Activated B cell treated with CpG ODN at 0.5 μM for 24 hours (primary cell): ENCODE measurements at regions of chr1 and their contacts with region 1.

Region 1: GRCh38 chr1:223133824-223134435 is 9.1 kb downstream of the TLR5 start:
- DNase-seq: peak; percentile 62
- ATAC-seq: peak; percentile 92
- H3K4me3 Mint-ChIP-seq: peak overlapping the region; percentile 55
- H3K27ac Mint-ChIP-seq: no peak overlapping the region
- H3K4me1 Mint-ChIP-seq: peaks cover 12% of the 10 kb centered on the region
- H3K27me3 Mint-ChIP-seq: peaks cover 62% of the 10 kb centered on the region
- CTCF ChIP-seq: no peak

Region 2: DNA sequence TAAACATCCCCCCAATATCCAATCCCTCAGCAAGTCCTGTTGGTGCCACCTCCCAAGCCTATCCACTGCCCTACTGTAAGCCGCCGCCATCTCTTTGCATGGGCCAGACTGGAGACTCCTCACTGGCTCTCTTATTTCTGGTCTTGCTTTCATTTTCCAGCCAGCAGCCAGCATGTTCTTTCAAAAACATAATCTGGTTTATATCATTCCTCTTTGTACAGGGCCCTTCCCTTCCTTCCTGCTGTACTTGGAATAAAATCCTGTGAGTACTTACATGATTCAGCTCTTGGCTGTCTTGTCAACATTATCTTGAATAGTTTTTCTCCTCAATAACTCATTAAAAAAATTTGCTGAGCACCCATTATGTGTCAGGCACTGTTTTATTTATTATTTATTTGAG is 19.1 kb before region 1 on chr1:
- CTCF ChIA-PET with region 1: interaction called, 10 read pairs
- POLR2A ChIA-PET with region 1: no interaction called
- intact Hi-C with region 1: no loop called
- DNase-seq: no peak
- ATAC-seq: no peak
- H3K4me3 Mint-ChIP-seq: no peak overlapping the region
- H3K27ac Mint-ChIP-seq: no peak overlapping the region
- H3K4me1 Mint-ChIP-seq: no peaks in the 10 kb centered on the region
- H3K27me3 Mint-ChIP-seq: peaks cover 4% of the 10 kb centered on the region
- CTCF ChIP-seq: no peak

Region 3: DNA sequence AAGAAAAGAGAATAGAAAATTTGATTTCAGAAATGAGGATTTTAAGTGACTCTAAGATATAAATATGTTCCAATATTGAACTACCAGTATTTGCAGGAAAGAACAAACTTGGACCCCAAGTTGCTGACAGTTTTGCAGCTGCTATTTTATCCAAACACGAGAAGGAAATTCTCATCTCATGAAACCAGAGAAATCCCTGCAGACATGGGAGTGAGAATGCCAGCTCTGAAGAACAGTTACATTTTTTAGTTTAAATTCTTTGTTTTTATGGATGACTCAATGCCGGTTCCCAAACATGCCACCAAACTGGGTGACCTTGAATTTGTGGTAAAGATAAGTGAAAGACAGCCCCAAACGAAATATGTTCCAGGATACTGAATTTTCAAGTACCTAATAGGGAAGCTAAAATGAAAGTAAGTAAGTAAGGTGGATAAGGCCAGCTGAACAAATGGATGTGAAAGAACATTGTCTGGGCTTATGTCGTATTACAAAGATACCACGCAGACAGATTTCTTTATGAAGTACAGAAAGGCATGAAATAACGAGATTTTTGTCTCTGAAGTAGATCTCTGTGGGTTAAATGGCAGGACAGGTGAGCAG is 10.8 kb before region 1 on chr1:
- CTCF ChIA-PET with region 1: interaction called, 38 read pairs
- POLR2A ChIA-PET with region 1: interaction called, 3 read pairs
- intact Hi-C with region 1: no loop called
- DNase-seq: no peak
- ATAC-seq: no peak
- H3K4me3 Mint-ChIP-seq: peak overlapping the region; percentile 36
- H3K27ac Mint-ChIP-seq: no peak overlapping the region
- H3K4me1 Mint-ChIP-seq: peaks cover 8% of the 10 kb centered on the region
- H3K27me3 Mint-ChIP-seq: peaks cover 7% of the 10 kb centered on the region
- CTCF ChIP-seq: no peak

Region 4: DNA sequence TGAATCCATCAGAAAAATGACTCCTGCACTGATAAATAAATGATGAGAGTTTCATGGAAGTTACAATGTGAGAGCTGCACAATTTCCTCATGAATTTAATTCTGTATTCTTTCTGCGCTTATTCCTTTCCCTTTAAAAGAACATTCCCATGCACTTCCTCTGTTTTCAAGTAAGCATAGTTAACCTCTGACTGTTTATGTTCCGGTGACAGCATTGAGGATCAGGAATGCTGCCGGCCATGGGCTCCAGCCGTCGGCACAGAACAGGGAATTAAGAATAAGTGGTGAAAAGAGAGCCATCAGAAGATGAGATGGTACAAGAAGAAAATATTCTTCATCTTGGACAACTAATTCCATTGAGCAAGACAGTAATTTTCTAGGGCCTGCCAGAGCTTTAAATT is 164.8 kb after region 1 on chr1:
- CTCF ChIA-PET with region 1: no interaction called
- POLR2A ChIA-PET with region 1: no interaction called
- intact Hi-C with region 1: no loop called
- DNase-seq: no peak
- ATAC-seq: no peak
- H3K4me3 Mint-ChIP-seq: no peak overlapping the region
- H3K27ac Mint-ChIP-seq: no peak overlapping the region
- H3K4me1 Mint-ChIP-seq: no peaks in the 10 kb centered on the region
- H3K27me3 Mint-ChIP-seq: no peaks in the 10 kb centered on the region
- CTCF ChIP-seq: no peak

Region 5: GRCh38 chr1:223363856-223364684 is 230.1 kb after region 1 on chr1 and contains the start of gene SUSD4:
- CTCF ChIA-PET with region 1: interaction called, 4 read pairs
- POLR2A ChIA-PET with region 1: no interaction called
- intact Hi-C with region 1: loop called (anchors 10 kb)
- DNase-seq: peak; percentile 21
- ATAC-seq: peak; percentile 66
- H3K4me3 Mint-ChIP-seq: peak within 1 kb of the TSS; percentile 81
- H3K27ac Mint-ChIP-seq: no peak within 1 kb of the TSS
- H3K4me1 Mint-ChIP-seq: peaks cover 18% of the 10 kb centered on the region
- H3K27me3 Mint-ChIP-seq: peaks cover 51% of the 10 kb centered on the region
- CTCF ChIP-seq: no peak
- total RNA-seq, gene SUSD4: not detected in 2 replicates

Region 6: DNA sequence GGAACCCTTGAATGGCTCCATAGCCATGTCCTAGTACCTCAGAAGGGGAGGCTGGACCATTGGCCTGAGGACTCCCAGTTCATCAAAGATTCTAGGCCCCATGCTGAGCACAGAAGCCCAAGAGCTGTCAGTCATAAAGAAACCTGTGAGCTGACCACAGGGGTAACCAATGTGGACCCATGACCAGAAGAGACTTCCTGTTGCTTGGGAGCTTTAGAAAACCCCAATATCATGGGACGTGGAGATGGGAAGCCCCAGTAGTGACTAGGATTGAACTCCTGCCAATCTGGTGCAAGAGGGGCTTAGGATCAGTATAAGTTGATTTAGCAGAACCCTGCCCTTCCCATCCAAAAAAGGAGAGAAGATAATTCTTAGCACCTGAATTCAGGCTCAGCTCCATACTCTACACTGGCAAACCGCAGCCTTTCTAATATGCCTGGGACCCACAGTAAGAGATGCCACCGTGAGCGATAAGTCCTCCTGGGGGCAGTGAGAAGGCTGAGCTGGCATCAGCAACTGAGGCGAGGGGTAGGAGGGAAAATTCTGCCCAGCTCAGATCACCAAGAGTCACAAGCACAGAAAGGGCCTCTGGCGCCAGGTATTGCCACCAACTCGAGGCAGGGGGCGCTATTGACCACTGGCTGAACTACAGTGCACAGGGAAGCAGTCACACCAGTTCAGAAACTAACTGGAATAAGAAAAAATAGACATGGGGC is 422.6 kb after region 1 on chr1:
- CTCF ChIA-PET with region 1: no interaction called
- POLR2A ChIA-PET with region 1: no interaction called
- intact Hi-C with region 1: no loop called
- DNase-seq: no peak
- ATAC-seq: no peak
- H3K4me3 Mint-ChIP-seq: no peak overlapping the region
- H3K27ac Mint-ChIP-seq: no peak overlapping the region
- H3K4me1 Mint-ChIP-seq: no peaks in the 10 kb centered on the region
- H3K27me3 Mint-ChIP-seq: peaks cover 3% of the 10 kb centered on the region
- CTCF ChIP-seq: no peak

Region 7: DNA sequence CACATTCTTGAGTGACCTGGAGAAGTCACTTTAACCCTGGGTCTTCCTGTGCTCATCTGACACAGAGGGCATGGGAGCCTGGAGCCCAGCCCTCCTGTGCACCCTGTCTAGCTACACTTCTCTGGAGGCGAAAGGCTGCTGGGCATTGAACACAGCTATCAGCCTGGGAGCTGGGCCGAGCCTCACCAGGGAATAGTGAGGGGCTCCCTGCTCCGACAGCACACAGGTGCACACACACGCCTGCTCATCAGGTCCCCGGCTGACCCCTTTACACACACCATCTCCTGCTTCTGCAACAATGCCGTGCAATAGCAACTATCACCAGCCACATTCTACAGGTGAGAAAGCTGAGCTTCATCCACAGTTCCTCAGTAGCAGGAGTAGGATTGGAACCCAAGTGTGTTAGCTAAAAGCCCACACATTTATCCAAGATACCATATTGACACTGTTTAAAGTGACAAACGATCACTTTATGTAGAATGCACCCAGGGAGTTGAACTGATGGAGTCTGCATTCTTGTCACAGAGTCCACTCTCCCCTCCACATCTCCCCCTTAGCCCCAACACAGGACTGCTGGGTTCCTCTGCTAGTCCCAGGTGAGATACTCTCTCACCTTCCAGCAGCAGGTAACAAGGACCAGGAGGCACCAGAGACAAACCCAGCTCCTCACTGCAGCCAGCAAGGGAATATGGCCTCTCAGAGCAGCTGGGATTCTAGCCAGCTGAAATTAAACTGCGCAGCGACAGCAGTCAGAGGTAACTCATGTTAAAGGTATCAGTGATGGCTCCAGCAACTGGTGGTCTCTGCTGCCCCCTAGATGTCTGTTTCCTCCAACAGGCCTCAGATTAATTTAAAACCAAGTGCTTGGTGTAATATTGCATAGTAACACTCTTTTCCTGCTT is 549.9 kb after region 1 on chr1:
- CTCF ChIA-PET with region 1: interaction called, 31 read pairs
- POLR2A ChIA-PET with region 1: no interaction called
- intact Hi-C with region 1: loop called (anchors 1 kb)
- DNase-seq: peak; percentile 20
- ATAC-seq: peak; percentile 47
- H3K4me3 Mint-ChIP-seq: no peak overlapping the region
- H3K27ac Mint-ChIP-seq: no peak overlapping the region
- H3K4me1 Mint-ChIP-seq: no peaks in the 10 kb centered on the region
- H3K27me3 Mint-ChIP-seq: peaks cover 10% of the 10 kb centered on the region
- CTCF ChIP-seq: no peak